Thyroid gland (tissue), 4 donors: ENCODE measurements at regions of chr2 and their contacts with region 1.

Region 1: GRCh38 chr2:46610021-46610420 is 130.7 kb downstream of the TMEM247 start:
- DNase-seq: no peak
- H3K4me3 ChIP-seq: no peak overlapping the region
- H3K27ac ChIP-seq: no peak overlapping the region
- H3K4me1 ChIP-seq: no peaks in the 10 kb centered on the region
- H3K27me3 ChIP-seq: no peaks in the 10 kb centered on the region
- CTCF ChIP-seq: no peak
- POLR2A ChIP-seq: no peak

Region 2: DNA sequence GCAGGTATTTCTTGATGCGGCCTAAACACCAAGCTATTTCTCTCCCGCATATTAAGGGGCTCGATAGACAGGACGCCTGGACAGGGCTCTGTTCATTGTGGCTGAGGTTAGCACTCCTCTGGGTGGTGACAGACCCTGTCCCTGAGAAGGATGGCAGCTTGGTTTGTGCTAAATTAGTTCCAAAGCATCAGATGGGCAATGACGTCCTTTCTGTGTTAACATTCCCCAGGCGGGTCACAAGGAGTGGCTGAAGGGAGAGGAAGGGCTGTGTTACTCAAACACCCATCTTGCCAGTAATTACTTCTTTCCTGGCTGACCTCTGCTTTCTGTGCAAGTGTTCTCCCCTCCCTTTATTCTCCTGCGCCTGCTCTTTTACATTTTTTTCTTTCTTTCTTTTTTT is 55.6 kb before region 1 on chr2:
- intact Hi-C with region 1: loop called (anchors 5 kb)
- DNase-seq: no peak
- H3K4me3 ChIP-seq: no peak overlapping the region
- H3K27ac ChIP-seq: no peak overlapping the region
- H3K4me1 ChIP-seq: peaks cover 0 to 13% of the 10 kb centered on the region in 2 donors
- H3K27me3 ChIP-seq: no peaks in the 10 kb centered on the region
- CTCF ChIP-seq: no peak
- POLR2A ChIP-seq: no peak